Heart right ventricle (tissue), 16 donors: ENCODE measurements at regions of chr4 and their contacts with region 1.

Region 1: DNA sequence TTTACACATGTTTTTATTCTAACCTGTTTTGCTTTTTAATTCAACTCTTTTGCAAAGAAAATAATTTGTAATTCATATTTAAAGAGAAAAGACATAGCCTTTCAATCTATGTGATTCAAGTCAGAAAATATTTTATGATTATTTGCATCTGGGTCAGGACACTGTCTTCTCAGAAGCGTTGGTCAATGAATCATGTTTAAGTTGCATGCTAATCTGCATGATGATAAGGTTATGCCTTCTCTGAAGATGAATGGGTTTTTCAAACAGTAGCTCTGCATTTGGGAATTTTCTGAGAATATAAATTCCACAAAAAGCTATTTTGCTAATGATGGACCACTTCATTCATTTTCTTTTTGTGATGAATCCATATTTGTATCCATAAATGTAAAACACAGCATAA is 282.5 kb downstream of the TMA16 start:
- DNase-seq: no peak
- ATAC-seq: no peak
- H3K4me3 ChIP-seq: no peak overlapping the region
- H3K27ac ChIP-seq: no peak overlapping the region
- H3K4me1 ChIP-seq: no peaks in the 10 kb centered on the region
- H3K27me3 ChIP-seq: no peaks in the 10 kb centered on the region
- CTCF ChIP-seq: no peak

Region 2: DNA sequence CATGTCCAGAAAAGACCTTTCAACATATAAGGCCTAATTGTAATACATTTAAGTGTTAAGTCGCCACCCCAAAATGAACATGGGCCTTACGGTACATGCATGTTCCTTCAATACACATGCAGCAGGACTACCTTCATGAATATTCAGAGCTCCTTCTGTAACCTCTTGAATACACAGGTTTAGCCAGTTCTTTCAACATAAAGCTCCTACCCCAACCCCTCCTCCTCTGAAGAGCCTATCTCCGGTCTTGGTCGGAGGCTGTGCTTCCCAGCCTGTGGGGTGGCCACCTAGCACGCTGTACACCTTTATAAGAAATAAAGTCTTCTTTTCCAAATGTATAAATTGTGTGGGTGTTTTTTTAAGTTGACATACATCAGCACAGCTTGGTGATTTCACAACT is 404.9 kb before region 1 on chr4:
- intact Hi-C with region 1: loop called in 1 of 10 experiments (anchors 5 kb)
- DNase-seq: no peak
- ATAC-seq: no peak
- H3K4me3 ChIP-seq: no peak overlapping the region
- H3K27ac ChIP-seq: no peak overlapping the region
- H3K4me1 ChIP-seq: no peaks in the 10 kb centered on the region
- H3K27me3 ChIP-seq: no peaks in the 10 kb centered on the region
- CTCF ChIP-seq: no peak